Endothelial cell of umbilical vein (primary cell): ENCODE measurements at regions of chr9 and their contacts with region 1.

Region 1: DNA sequence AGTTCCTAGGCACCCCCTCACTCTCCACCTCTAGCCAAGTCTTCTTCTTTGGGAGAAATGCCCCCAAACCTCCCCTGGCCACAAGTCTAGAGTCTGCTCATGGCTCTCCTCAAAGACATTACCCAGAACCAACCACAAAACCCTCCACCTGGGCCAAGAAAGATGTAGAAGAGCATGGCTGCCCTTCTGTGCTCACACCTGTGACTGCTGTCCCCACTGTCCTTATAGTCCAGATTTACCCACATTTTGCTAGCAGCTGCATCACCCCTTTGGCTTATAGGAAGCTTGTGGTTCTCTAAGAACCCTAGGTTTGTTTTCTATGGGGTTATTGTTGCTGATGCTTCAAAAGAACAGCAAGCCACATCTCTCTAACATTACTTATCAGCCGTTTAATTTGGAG is 6.1 kb upstream of the GABBR2 start:
- DNase-seq: no peak
- H3K4me3 ChIP-seq: no peak overlapping the region
- H3K27ac ChIP-seq: no peak overlapping the region
- H3K4me1 ChIP-seq: no peaks in the 10 kb centered on the region
- H3K27me3 ChIP-seq: peaks cover 15 to 18% of the 10 kb centered on the region in 2 experiments
- CTCF ChIP-seq: no peak
- POLR2A ChIP-seq: no peak

Region 2: DNA sequence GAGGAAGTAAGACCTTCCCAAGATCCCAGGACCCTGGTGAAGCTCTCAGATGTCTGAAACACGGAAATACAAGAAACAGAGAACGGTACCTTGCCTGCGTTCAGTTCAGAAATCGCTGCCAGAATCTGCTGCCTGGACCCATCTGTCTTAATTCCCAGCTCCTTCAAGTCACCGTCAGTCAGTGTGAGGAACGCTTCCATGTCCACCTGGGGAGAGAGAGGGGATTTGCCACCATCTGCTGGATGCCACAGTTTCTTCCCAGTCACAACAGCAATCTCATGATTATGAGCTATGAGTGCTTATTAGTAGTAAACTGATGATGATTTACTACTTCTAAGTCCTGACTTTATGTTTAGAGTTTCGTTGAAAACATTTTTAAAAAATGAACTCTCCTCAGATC is 30.6 kb after region 1 on chr9:
- CTCF ChIA-PET with region 1: no interaction called
- POLR2A ChIA-PET with region 1: no interaction called
- dilution Hi-C with region 1: no loop called
- intact Hi-C with region 1: loop called (anchors 2 kb)
- DNase-seq: no peak
- H3K4me3 ChIP-seq: no peak overlapping the region
- H3K27ac ChIP-seq: no peak overlapping the region
- H3K4me1 ChIP-seq: no peaks in the 10 kb centered on the region
- H3K27me3 ChIP-seq: no peaks in the 10 kb centered on the region
- CTCF ChIP-seq: no peak
- POLR2A ChIP-seq: no peak